SK-N-SH (cell line): ENCODE measurements at regions of chr1 and their contacts with region 1.

Region 1: GRCh38 chr1:180515864-180516388 is 13.5 kb upstream of the ACBD6 start:
- DNase-seq: peak; percentile 83
- H3K4me3 ChIP-seq: no peak overlapping the region; a peak in 1 of 4 replicates
- H3K27ac ChIP-seq: peak overlapping the region; percentile 43 to 87
- H3K4me1 ChIP-seq: peaks cover 0 to 11% of the 10 kb centered on the region in 2 experiments; a peak in 2 of 4 replicates
- H3K27me3 ChIP-seq: no peaks in the 10 kb centered on the region
- CTCF ChIP-seq: peak; percentile 86
- EP300 ChIP-seq: no peak
- RAD21 ChIP-seq: peak; percentile 96

Region 2: DNA sequence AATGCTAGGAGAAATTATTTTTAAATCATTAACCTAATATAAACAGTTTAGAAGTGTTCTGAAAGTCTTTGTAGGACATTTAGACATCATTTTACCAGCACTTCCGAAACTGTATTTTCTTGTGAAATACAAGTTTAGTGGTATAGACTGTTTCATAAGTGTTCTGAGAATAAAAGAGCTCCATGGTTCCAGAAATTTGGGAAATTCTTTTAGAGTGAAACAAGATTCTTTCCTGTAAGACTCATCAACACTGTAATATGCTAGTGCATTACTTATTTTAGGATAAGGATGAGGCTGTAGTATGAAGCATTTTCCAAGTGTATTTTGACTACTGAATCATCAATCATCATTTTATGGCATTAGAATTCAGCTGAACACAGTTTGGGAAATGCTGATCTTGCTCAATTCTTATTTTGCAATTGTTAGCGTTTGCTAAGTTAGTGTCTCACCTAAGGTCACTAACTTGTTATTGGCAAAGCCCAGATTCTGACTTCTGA is 487.9 kb before region 1 on chr1:
- CTCF ChIA-PET with region 1: no interaction called
- POLR2A ChIA-PET with region 1: no interaction called
- DNase-seq: no peak
- H3K4me3 ChIP-seq: no peak overlapping the region
- H3K27ac ChIP-seq: peak overlapping the region in 1 of 2 experiments; percentile 60; a peak in 2 of 4 replicates
- H3K4me1 ChIP-seq: peaks cover 0 to 10% of the 10 kb centered on the region in 2 experiments; a peak in 1 of 4 replicates
- H3K27me3 ChIP-seq: no peaks in the 10 kb centered on the region
- CTCF ChIP-seq: no peak
- EP300 ChIP-seq: no peak
- RAD21 ChIP-seq: no peak

Region 3: GRCh38 chr1:180502360-180503273 is 13.3 kb before region 1 on chr1 and contains the start of gene ACBD6:
- CTCF ChIA-PET with region 1: interaction called, 28 read pairs
- POLR2A ChIA-PET with region 1: interaction called, 10 read pairs
- DNase-seq: peak; percentile 93
- H3K4me3 ChIP-seq: peak within 1 kb of the TSS; percentile 71 to 80
- H3K27ac ChIP-seq: peak within 1 kb of the TSS; percentile 86 to 97
- H3K4me1 ChIP-seq: peaks cover 10 to 11% of the 10 kb centered on the region in 2 experiments
- H3K27me3 ChIP-seq: no peaks in the 10 kb centered on the region
- CTCF ChIP-seq: peak; percentile 21
- EP300 ChIP-seq: peak in 1 of 2 experiments; percentile 34; a peak in 1 of 4 replicates
- RAD21 ChIP-seq: no peak
- polyA plus RNA-seq, gene ACBD6: 60.9 and 65.2 TPM in 2 replicates

Region 4: GRCh38 chr1:180527101-180527669 is 11.3 kb after region 1 on chr1:
- CTCF ChIA-PET with region 1: interaction called, 38 read pairs
- POLR2A ChIA-PET with region 1: no interaction called
- DNase-seq: no peak
- H3K4me3 ChIP-seq: no peak overlapping the region
- H3K27ac ChIP-seq: no peak overlapping the region
- H3K4me1 ChIP-seq: peaks cover 0 to 18% of the 10 kb centered on the region in 2 experiments; a peak in 2 of 4 replicates
- H3K27me3 ChIP-seq: no peaks in the 10 kb centered on the region
- CTCF ChIP-seq: no peak
- EP300 ChIP-seq: no peak
- RAD21 ChIP-seq: no peak

Region 5: DNA sequence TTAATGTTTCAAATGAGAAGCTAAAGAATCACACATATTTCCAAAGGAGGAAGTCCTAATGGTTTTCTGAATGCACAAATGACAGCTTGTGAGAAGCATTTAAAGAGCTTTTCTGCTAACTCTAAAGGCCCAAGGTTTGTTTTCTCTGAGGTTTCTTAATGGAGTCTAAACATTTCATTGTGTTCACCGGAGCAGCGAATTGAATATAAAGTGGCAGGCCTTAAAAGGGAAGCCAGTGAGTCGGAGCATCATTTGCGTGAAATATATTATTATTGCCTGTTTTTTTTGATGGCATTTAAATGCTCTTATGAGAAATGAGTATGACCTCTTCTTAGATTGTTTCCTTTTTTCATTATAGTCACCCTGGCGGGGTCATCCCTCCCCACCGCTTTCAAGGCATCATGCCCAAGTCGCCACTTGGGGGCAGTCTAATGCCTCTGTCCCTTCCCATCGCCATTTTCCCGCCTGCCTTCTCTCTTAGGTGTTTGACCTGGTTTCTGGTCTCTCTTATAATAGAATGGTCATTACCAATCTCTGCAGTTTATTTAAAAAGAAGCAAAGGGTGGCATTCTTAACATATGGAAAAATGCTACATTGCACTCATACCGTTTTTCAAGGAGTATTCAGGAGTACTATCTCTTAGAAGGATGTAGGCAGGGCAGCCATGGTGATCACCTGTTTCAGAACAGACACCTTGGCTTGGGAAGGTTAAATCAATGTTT is 17.5 kb after region 1 on chr1:
- CTCF ChIA-PET with region 1: interaction called, 38 read pairs
- POLR2A ChIA-PET with region 1: no interaction called
- DNase-seq: peak; percentile 72
- H3K4me3 ChIP-seq: no peak overlapping the region; a peak in 1 of 4 replicates
- H3K27ac ChIP-seq: peak overlapping the region in 1 of 2 experiments; percentile 0; a peak in 1 of 4 replicates
- H3K4me1 ChIP-seq: peaks cover 0 to 11% of the 10 kb centered on the region in 2 experiments; a peak in 2 of 4 replicates
- H3K27me3 ChIP-seq: no peaks in the 10 kb centered on the region
- CTCF ChIP-seq: peak; percentile 95
- EP300 ChIP-seq: no peak
- RAD21 ChIP-seq: peak; percentile 97

Region 6: GRCh38 chr1:180631766-180632325 is 115.9 kb after region 1 on chr1 and contains the start of gene XPR1:
- CTCF ChIA-PET with region 1: interaction called, 10 read pairs
- POLR2A ChIA-PET with region 1: no interaction called
- DNase-seq: peak; percentile 95
- H3K4me3 ChIP-seq: peak within 1 kb of the TSS; percentile 72 to 99
- H3K27ac ChIP-seq: peak within 1 kb of the TSS; percentile 85 to 95
- H3K4me1 ChIP-seq: peaks cover 20 to 22% of the 10 kb centered on the region in 2 experiments; a peak in 3 of 4 replicates
- H3K27me3 ChIP-seq: no peaks in the 10 kb centered on the region
- CTCF ChIP-seq: no peak
- EP300 ChIP-seq: no peak
- RAD21 ChIP-seq: peak; percentile 44; the same call in 1 of the 2 replicates
- polyA plus RNA-seq, gene XPR1: 7.9 and 11.5 TPM in 2 replicates

Region 7: GRCh38 chr1:180762796-180763195 is 246.9 kb after region 1 on chr1:
- CTCF ChIA-PET with region 1: no interaction called
- POLR2A ChIA-PET with region 1: no interaction called
- DNase-seq: no peak
- H3K4me3 ChIP-seq: no peak overlapping the region
- H3K27ac ChIP-seq: no peak overlapping the region
- H3K4me1 ChIP-seq: no peaks in the 10 kb centered on the region
- H3K27me3 ChIP-seq: no peaks in the 10 kb centered on the region
- CTCF ChIP-seq: no peak
- EP300 ChIP-seq: no peak
- RAD21 ChIP-seq: no peak